ENCODE measurements at regions of chr5 and their contacts with region 1.

Region 1: DNA sequence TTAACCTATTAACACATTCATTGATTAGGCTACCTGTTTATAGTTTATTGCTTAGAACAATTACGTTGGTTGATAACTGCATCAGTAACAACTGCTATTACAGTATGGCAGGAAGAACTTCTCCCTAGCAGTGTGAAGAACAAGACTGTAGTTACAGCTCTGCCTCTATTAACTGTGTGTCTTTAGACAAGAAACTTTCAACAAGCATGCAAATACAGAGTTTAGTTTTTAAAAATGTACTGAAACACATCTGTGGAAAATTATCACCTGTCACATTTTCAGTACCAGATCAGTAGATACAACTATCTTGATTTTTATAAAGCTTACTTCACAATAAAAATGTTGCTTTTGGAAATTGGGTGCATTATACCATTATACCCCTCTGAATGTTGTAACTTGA is 22.2 kb downstream of the ELL2 start:
- DNase-seq: no peak

Region 2: DNA sequence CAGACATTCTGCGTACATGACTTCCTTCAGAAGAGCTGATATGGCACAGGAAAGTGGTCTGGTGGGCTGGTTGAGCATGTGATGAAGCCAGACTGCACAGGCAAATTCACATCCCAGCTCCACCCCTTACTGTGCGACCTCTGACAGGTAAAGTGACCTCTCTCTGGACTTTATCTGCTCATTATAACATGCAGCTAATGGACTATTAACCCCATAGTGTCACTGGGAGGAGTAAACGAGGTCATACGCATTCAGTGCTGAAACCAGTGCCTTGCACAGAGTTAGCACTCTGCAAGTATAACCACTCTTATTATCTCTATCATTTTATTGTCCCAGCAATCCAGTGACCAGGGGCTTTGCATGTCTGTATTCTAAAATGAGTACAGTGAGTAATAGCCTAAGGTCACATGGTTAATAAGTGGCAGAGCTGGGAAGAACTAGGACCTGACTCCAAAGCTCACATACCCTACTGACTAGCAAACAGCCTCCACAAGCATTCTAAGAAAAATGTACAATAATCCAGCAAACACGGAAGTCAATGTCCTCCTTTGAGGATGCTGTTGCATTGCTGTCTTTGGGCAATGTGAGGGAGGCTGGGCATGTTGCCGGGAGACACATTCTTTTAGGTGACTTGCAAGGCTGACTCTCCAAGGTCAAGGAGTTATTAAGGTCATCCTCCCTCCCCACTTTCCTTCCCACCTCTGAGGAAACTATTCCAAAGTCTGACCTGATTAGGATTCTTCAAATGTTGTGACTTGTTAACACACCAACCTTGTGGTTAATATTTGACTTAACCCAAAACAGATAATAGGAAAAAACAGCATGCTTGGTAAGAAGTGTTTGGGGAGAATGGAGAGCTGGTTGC is 135.9 kb before region 1 on chr5:
- intact Hi-C with region 1: no loop called
- DNase-seq: peak in 1 of 42 donors; percentile 14

Region 3: GRCh38 chr5:95900383-95900958 is 39.0 kb before region 1 on chr5:
- intact Hi-C with region 1: loop called (anchors 5 kb)
- DNase-seq: peak in 19 of 42 donors; percentile 19 to 79 (median 41)

Measured in head of caudate nucleus (tissue), 42 donors.